IMR-90 (cell line): ENCODE measurements at regions of chr13 and their contacts with region 1.

Region 1: DNA sequence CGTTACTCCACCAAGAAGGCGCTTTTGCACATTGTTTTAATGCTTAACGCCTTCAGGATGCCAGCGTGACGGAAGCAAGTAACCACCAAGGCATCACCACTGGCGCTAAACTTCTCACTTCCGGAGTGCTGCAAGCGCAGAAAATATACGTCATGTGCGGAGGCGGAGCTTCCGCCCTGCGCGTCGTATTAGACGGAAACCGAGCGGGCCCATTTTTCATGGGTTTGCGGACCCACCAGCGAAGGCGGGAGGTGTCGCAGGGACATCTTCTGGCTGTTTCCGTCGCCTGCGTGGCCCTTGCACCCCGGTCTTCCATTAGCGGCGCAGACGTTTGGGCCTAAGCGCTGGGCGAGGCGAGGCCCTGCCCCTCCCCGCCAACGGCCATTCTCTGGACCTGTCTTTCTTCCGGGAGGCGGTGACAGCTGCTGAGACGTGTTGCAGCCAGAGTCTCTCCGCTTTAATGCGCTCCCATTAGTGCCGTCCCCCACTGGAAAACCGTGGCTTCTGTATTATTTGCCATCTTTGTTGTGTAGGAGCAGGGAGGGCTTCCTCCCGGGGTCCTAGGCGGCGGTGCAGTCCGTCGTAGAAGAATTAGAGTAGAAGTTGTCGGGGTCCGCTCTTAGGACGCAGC is at the start of gene ERCC5:
- DNase-seq: peak; percentile 95
- ATAC-seq: peak; percentile 87
- H3K4me3 ChIP-seq: peak within 1 kb of the TSS; percentile 63
- H3K27ac ChIP-seq: peak within 1 kb of the TSS; percentile 85
- H3K4me1 ChIP-seq: peaks cover 4% of the 10 kb centered on the region
- H3K27me3 ChIP-seq: no peaks in the 10 kb centered on the region
- CTCF ChIP-seq: no peak
- POLR2A ChIP-seq: peak; percentile 75; the same call in 1 of the 2 replicates
- RAD21 ChIP-seq: no peak
- total RNA-seq, gene ERCC5: 34.4 and 50.8 TPM in 2 replicates

Region 2: DNA sequence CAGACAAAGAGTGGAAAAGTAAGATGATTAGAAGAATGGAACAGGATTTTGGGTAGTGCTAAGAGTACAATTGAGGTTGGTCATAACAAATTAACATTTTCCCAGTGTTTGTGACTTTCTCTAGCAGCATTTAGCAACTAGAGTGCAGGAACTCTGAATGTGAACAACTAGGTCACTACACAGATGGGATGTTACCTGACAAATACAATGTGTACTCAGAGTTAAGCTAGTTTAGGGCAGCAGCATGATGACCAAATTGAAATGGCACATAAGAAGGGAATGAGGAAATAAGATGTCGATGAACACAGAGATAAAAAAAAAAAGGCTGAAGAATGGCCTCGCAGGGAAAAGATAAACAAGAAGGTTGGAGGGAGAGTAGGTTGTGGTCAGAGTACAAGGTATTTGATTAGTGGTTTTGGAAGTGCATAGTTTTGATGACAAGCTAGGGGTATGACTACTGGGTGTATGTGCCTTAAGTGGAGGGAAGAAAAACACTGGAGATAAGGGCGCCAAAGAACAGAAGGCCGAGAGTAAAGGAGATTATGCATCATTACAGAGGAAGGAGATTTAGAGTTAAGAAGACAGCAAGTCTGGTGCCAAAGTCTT is 825.0 kb before region 1 on chr13:
- CTCF ChIA-PET with region 1: no interaction called
- POLR2A ChIA-PET with region 1: no interaction called
- dilution Hi-C with region 1: no loop called
- in situ Hi-C with region 1: no loop called
- intact Hi-C with region 1: no loop called
- DNase-seq: no peak
- ATAC-seq: no peak
- H3K4me3 ChIP-seq: no peak overlapping the region
- H3K27ac ChIP-seq: no peak overlapping the region
- H3K4me1 ChIP-seq: no peaks in the 10 kb centered on the region
- H3K27me3 ChIP-seq: no peaks in the 10 kb centered on the region
- CTCF ChIP-seq: no peak
- POLR2A ChIP-seq: no peak
- RAD21 ChIP-seq: no peak

Region 3: GRCh38 chr13:102580552-102581169 is 265.1 kb before region 1 on chr13:
- CTCF ChIA-PET with region 1: interaction called, 4 read pairs
- POLR2A ChIA-PET with region 1: no interaction called
- dilution Hi-C with region 1: no loop called
- in situ Hi-C with region 1: loop called (anchors 5 kb)
- intact Hi-C with region 1: loop called (anchors 1 kb)
- DNase-seq: peak; percentile 80
- ATAC-seq: peak; percentile 92
- H3K4me3 ChIP-seq: no peak overlapping the region
- H3K27ac ChIP-seq: no peak overlapping the region
- H3K4me1 ChIP-seq: no peaks in the 10 kb centered on the region
- H3K27me3 ChIP-seq: peaks cover 19% of the 10 kb centered on the region
- CTCF ChIP-seq: peak; percentile 84
- POLR2A ChIP-seq: no peak
- RAD21 ChIP-seq: peak; percentile 85

Region 4: DNA sequence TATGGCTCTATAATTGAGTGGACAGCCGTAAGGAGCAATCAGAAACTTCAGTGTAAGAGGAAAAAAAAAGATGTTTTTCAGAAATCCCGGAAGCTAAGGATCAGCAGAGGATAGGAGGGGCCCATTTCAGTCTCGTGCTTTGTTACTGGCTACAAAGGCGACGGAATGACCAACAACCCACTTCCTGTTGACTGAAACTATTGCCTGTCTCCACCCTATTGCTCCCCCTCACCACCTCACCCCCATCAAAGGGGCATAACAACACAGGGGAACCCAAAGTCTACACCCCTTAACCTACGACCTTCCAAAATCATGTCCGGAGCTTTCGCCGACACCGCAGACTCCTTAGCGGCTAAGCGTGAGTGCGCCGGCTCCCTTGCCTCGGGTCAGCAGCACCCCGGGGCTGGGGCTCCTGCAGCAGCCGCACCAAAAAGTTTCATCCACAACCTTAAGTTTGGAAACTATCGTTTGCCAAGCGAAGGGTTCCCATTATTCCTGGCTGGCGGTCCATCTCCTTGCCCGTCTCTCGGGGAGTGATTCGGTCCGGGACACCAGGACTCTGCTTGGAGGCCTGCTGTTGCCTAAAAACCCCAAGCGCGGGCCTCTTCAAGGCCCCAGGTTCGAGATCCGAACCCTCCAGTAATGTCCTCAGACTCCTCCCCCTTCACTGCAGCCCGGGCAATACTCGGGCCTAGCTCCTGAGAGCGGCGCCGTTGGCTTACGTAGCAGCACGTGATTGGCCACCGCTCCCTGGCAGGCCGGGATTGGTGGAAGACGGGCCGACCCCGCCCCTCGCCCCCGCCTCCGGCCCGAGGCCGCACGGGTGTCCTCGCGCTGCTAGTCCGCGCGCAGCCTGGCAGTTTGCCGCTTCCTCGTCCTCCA is 249.4 kb before region 1 on chr13 and contains the start of gene TPP2:
- CTCF ChIA-PET with region 1: interaction called, 3 read pairs
- POLR2A ChIA-PET with region 1: no interaction called
- dilution Hi-C with region 1: no loop called
- in situ Hi-C with region 1: loop called (anchors 5 kb)
- intact Hi-C with region 1: loop called (anchors 1 kb)
- DNase-seq: peak; percentile 98
- ATAC-seq: peak; percentile 94
- H3K4me3 ChIP-seq: peak within 1 kb of the TSS; percentile 80
- H3K27ac ChIP-seq: peak within 1 kb of the TSS; percentile 94
- H3K4me1 ChIP-seq: 0 out of 2 replicates have a peak, but pooled peaks cover 3% of the 10 kb centered on the region
- H3K27me3 ChIP-seq: no peaks in the 10 kb centered on the region
- CTCF ChIP-seq: no peak
- POLR2A ChIP-seq: peak; percentile 79
- RAD21 ChIP-seq: no peak
- total RNA-seq, gene TPP2: 52.9 and 62.2 TPM in 2 replicates

Region 5: GRCh38 chr13:102651892-102652291 is 193.9 kb before region 1 on chr13:
- CTCF ChIA-PET with region 1: no interaction called
- POLR2A ChIA-PET with region 1: no interaction called
- dilution Hi-C with region 1: no loop called
- in situ Hi-C with region 1: no loop called
- intact Hi-C with region 1: loop called (anchors 5 kb)
- DNase-seq: peak; percentile 52
- ATAC-seq: peak; percentile 68
- H3K4me3 ChIP-seq: no peak overlapping the region
- H3K27ac ChIP-seq: peak overlapping the region; percentile 2; the same call in 1 of the 2 replicates
- H3K4me1 ChIP-seq: peaks cover 5% of the 10 kb centered on the region
- H3K27me3 ChIP-seq: no peaks in the 10 kb centered on the region
- CTCF ChIP-seq: no peak
- POLR2A ChIP-seq: no peak
- RAD21 ChIP-seq: no peak

Region 6: DNA sequence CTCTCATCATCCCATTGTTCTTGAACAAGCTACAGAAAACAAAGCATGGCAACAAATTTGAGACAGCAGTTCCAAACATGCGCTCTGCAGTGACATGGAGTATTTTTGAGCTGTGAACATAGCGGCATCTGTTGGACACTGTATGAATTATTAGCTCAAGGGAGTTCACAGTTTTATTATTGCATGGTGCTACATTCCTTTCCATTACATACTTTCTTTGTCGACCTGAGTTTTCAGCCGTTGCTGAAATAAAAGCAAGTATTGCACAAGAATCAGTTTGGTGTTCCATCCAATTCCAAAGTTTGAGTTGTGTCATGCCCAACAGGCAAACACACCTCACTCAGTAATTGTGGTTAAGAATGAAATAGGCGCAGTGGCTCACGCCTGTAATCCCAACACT is 120.8 kb before region 1 on chr13:
- CTCF ChIA-PET with region 1: no interaction called
- POLR2A ChIA-PET with region 1: no interaction called
- dilution Hi-C with region 1: no loop called
- in situ Hi-C with region 1: no loop called
- intact Hi-C with region 1: loop called (anchors 5 kb)
- DNase-seq: peak; percentile 24
- ATAC-seq: peak; percentile 80
- H3K4me3 ChIP-seq: no peak overlapping the region
- H3K27ac ChIP-seq: no peak overlapping the region
- H3K4me1 ChIP-seq: no peaks in the 10 kb centered on the region
- H3K27me3 ChIP-seq: no peaks in the 10 kb centered on the region; the same call in 1 of the 2 replicates
- CTCF ChIP-seq: peak; percentile 40
- POLR2A ChIP-seq: no peak
- RAD21 ChIP-seq: peak; percentile 48

Region 7: GRCh38 chr13:102773441-102774215 is 72.1 kb before region 1 on chr13 and contains the start of gene TEX30:
- CTCF ChIA-PET with region 1: no interaction called
- POLR2A ChIA-PET with region 1: no interaction called
- dilution Hi-C with region 1: no loop called
- in situ Hi-C with region 1: no loop called
- intact Hi-C with region 1: loop called (anchors 1 kb)
- DNase-seq: peak; percentile 76
- ATAC-seq: peak; percentile 97
- H3K4me3 ChIP-seq: peak within 1 kb of the TSS; percentile 76
- H3K27ac ChIP-seq: peak within 1 kb of the TSS; percentile 85
- H3K4me1 ChIP-seq: peaks cover 2% of the 10 kb centered on the region; the same call in 1 of the 2 replicates
- H3K27me3 ChIP-seq: no peaks in the 10 kb centered on the region
- CTCF ChIP-seq: no peak
- POLR2A ChIP-seq: peak; percentile 92
- RAD21 ChIP-seq: 0 out of 2 replicates have a peak, but pooled peaks have one; percentile 2
- total RNA-seq, gene TEX30: 8.1 and 15.3 TPM in 2 replicates

Region 8: DNA sequence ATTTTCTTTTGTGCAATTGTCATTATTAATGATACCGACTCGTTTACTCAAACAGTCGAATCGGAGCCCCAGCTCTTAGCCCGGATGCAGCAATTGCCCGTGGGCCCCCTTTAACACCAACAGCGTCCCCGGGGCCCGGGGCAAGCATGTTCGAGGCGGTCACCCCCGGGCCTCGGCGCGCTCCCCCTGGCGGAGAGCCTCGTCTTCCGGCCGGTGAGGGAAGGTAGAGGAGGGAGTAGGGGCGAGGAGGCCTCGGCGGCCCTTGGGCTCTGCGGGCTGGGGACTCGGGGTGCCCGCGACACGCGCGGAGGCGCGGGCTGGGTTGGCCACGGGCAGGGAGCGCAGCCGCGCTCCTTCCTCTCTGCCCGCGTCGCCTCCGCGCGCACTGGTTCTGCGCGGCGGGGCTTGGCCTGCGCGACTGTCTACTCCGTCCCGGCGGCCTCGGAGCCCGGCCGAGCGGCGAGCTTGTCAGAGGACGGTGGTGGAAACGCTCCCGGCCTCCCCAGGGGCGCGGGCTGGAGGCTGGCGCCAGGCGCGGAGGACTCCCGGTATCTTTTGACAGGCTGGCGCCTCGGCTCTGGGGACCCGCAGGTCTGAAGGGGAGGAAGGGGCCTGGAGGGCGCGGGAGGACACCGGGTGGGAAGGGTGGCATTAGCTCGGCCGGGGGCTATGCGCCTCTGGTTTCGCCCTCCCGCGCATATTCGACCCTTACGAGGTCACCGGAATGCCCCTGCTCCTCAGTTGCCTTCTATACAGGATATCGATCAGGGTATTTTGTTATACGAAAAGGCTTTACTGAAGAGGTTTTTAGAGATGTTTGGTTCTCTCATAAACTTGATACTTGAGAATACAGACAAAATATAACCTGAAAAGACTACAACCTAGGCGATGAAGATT is 45.4 kb before region 1 on chr13:
- CTCF ChIA-PET with region 1: interaction called, 6 read pairs
- POLR2A ChIA-PET with region 1: interaction called, 3 read pairs
- dilution Hi-C with region 1: no loop called
- in situ Hi-C with region 1: no loop called
- intact Hi-C with region 1: loop called (anchors 1 kb)
- DNase-seq: peak; percentile 68
- ATAC-seq: peak; percentile 78
- H3K4me3 ChIP-seq: peak overlapping the region; percentile 84
- H3K27ac ChIP-seq: peak overlapping the region; percentile 68
- H3K4me1 ChIP-seq: 0 out of 2 replicates have a peak, but pooled peaks cover 3% of the 10 kb centered on the region
- H3K27me3 ChIP-seq: no peaks in the 10 kb centered on the region
- CTCF ChIP-seq: peak; percentile 66
- POLR2A ChIP-seq: peak; percentile 40; the same call in 1 of the 2 replicates
- RAD21 ChIP-seq: peak; percentile 25; the same call in 1 of the 2 replicates

Region 9: DNA sequence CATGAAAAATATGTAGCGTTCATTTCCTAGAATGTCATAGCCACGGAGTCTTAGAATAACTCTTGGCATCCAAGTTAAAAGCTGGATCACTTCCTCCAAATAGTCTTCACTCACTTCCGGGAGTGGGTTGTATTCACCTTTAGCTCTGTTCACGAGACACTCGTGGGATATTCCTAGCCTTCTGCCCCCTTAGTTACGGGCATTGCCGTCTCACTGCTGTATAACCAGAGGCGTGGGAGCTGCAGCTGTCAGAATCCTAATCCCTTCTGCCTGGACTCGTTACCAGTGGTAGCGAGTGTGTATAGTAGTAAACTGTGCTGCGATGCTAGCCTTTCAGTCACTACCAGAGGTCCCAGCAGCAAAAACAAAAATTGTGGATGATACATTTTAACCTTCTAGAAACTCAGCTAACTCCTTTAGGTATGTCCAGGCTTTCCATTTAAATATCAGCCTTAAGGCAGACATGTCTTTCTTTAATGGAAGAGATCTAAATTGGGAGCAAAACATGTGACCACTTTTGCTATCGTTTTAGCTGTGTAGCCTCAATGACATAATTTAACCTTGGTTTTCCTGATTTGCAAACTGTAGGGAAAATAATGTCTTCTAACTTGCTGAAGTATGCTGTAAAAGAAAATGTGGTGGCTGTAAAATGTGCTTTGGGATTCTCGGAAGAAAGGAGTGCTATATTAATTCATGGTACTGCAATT is 34.2 kb after region 1 on chr13:
- CTCF ChIA-PET with region 1: no interaction called
- POLR2A ChIA-PET with region 1: no interaction called
- dilution Hi-C with region 1: no loop called
- in situ Hi-C with region 1: no loop called
- intact Hi-C with region 1: no loop called
- DNase-seq: no peak
- ATAC-seq: no peak
- H3K4me3 ChIP-seq: no peak overlapping the region
- H3K27ac ChIP-seq: no peak overlapping the region
- H3K4me1 ChIP-seq: peaks cover 3% of the 10 kb centered on the region
- H3K27me3 ChIP-seq: no peaks in the 10 kb centered on the region
- CTCF ChIP-seq: no peak
- POLR2A ChIP-seq: no peak
- RAD21 ChIP-seq: no peak

Region 10: GRCh38 chr13:102999499-102999898 is 153.8 kb after region 1 on chr13:
- CTCF ChIA-PET with region 1: no interaction called
- POLR2A ChIA-PET with region 1: no interaction called
- dilution Hi-C with region 1: no loop called
- in situ Hi-C with region 1: no loop called
- intact Hi-C with region 1: no loop called
- DNase-seq: no peak
- ATAC-seq: no peak
- H3K4me3 ChIP-seq: no peak overlapping the region
- H3K27ac ChIP-seq: no peak overlapping the region
- H3K4me1 ChIP-seq: no peaks in the 10 kb centered on the region
- H3K27me3 ChIP-seq: no peaks in the 10 kb centered on the region
- CTCF ChIP-seq: no peak
- POLR2A ChIP-seq: no peak
- RAD21 ChIP-seq: no peak